Common myeloid progenitor, CD34-positive (primary cell): ENCODE measurements at regions of chr13 and their contacts with region 1.

Region 1: GRCh38 chr13:41054212-41054877 is 7.0 kb upstream of the WBP4 start:
- DNase-seq: peak; percentile 75 to 89 (median 87)
- H3K4me3 ChIP-seq: peak overlapping the region in 2 of 7 experiments; percentile 2 to 31
- H3K27ac ChIP-seq: peak overlapping the region in 1 of 2 experiments; percentile 56
- H3K4me1 ChIP-seq: peaks cover 33 to 86% (median 54%) of the 10 kb centered on the region in 4 experiments
- H3K27me3 ChIP-seq: no peaks in the 10 kb centered on the region

Region 2: GRCh38 chr13:40961214-40961613 is 93.1 kb before region 1 on chr13:
- CTCF ChIA-PET with region 1: no interaction called
- POLR2A ChIA-PET with region 1: no interaction called
- DNase-seq: peak; percentile 50 to 77 (median 75)
- H3K4me3 ChIP-seq: peak overlapping the region in 5 of 7 experiments; percentile 19 to 59 (median 29)
- H3K27ac ChIP-seq: peak overlapping the region; percentile 29 to 75
- H3K4me1 ChIP-seq: peaks cover 31 to 60% (median 45%) of the 10 kb centered on the region in 4 experiments
- H3K27me3 ChIP-seq: no peaks in the 10 kb centered on the region

Region 3: DNA sequence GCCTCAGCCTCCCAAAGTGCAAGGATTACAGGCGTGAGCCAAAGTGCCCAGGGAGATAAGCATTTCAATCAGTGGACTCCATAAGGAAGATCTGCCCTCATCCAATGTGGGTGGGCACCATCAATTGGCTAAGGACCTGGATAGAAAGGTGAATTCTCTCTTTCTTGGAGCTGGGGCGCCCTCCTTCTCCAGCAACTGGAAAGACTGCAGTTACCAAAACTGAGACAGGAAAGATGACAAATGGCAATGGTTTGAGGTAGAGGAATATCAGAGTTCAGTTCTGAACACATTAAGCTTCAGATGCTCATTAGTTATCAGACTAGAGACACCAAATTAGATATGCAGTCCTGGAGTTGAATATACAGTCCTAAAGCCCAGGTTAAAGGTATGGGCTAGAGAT is 24.7 kb before region 1 on chr13:
- CTCF ChIA-PET with region 1: interaction called, 11 read pairs
- POLR2A ChIA-PET with region 1: interaction called, 3 read pairs
- DNase-seq: peak; percentile 43 to 55 (median 52)
- H3K4me3 ChIP-seq: no peak overlapping the region
- H3K27ac ChIP-seq: no peak overlapping the region
- H3K4me1 ChIP-seq: peaks cover 3 to 16% (median 10%) of the 10 kb centered on the region in 4 experiments
- H3K27me3 ChIP-seq: no peaks in the 10 kb centered on the region